ENCODE measurements at regions of chr4 and their contacts with region 1.

Region 1: DNA sequence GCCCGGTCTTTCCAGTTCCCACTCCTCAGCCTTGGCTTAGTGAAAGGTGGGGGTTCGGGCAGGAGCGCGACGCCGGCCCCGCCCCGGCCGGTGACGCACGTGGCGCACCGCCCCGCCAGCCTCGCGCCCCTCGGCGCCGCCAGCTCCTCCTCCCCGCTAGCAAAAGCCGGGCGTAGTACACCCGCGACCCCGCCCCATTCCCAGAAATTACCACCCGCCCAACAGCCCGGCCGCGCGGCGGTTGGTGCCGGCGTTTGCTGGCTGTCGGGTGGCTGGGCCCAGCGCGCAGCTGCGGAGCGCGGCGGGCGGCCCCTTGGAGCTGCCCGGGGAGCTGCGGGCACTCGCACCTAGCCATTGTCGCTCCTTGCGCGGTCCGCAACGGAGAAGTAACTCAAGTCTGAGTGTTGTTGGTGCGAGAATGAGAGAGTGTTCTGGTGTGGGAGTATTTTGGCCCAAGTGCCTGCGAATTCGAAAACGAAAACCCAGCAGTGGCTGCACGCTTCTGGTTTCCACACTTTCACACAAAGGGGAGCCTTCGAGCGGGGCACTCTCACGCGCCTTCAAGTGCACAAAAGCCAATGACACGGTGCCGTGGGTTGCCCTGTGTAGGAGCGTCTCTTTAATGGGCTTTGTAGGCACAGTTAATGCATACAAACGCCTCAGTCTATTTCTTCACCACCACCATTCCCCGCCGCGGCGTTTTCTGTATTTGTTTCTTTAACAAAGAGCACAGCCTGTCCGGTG is 1.0 kb upstream of the ELF2 start:
- DNase-seq: peak; percentile 94
- ATAC-seq: peak; percentile 77
- H3K4me3 Mint-ChIP-seq: peak overlapping the region; percentile 91
- H3K27ac Mint-ChIP-seq: peak overlapping the region; percentile 86
- H3K4me1 Mint-ChIP-seq: peaks cover 13% of the 10 kb centered on the region
- H3K27me3 Mint-ChIP-seq: peaks cover 31% of the 10 kb centered on the region

Region 2: DNA sequence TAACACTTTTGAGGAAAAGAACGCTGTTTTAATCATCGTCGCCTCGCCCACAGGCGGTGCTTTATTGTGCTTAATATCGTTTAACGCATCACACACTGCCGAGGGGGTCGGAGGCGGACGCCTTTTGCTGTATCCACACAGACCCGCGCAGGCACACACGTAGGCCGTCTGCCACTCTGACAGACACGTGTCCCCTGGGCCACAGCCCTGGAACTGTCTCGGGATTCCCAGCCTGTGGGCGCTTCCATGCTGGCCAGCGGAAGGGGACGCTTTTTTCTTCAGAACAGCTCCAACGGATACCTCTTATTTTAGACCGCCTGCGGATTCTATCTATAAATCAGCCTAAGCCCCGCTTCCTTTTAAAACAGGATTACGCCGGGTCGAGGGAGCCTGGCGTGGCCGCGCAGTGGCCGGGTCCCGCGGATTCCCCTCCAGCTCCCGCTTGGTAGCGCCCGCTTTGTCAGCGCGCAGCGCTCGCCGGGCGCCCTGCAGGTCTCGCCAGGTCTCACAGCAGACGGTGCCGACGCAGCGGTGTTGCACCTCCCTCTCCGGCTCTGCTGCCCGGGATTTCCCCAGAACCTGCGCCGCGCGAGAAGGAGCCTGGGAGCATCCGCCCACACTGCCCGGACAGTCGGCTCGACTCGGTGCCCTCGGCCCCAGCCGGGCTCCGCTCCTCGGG is 162.6 kb before region 1 on chr4 and contains the start of gene NOCT:
- POLR2A ChIA-PET with region 1: interaction called, 11 read pairs
- DNase-seq: peak; percentile 90
- ATAC-seq: peak; percentile 97
- H3K4me3 Mint-ChIP-seq: peak within 1 kb of the TSS; percentile 91
- H3K27ac Mint-ChIP-seq: peak within 1 kb of the TSS; percentile 87
- H3K4me1 Mint-ChIP-seq: peaks cover 17% of the 10 kb centered on the region
- H3K27me3 Mint-ChIP-seq: no peaks in the 10 kb centered on the region
- total RNA-seq, gene NOCT: 4.7 to 5.9 TPM

Region 3: DNA sequence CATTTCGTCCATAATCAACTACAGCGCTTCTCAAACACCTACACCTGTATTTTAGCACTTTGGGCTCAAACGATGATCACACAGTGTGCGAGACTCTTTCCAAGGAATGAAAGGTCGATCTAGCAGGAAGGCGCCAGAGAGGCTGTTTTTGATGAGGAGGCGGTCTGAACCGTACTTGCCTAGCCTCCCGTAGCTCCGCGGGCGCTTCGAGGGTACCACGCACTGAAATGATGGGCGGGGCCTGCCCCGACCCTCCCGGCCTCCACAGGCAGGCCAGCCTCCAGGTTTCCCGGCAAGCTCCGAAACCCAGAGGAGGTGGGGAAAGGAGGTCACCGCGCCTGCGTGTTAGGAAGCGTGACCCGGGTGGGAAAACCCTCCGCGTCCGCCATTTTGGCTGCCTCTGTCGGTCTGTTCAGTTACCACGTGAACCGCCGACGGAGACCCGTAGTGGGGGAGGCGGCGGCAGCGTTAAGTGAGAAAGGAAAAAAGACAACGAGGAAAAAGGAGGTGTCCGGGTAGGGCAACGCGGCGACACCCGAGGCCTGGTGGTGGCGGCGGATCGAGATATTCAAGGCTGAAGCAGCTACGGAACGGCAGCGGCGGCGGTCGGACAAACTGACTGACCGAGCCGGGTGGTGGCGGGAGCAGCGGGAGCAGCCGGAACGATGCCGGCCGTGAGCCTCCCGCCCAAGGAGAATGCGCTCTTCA is 123.2 kb after region 1 on chr4 and contains the start of gene NAA15:
- POLR2A ChIA-PET with region 1: interaction called, 20 read pairs
- DNase-seq: peak; percentile 95
- ATAC-seq: peak; percentile 90
- H3K4me3 Mint-ChIP-seq: peak within 1 kb of the TSS; percentile 93
- H3K27ac Mint-ChIP-seq: peak within 1 kb of the TSS; percentile 95
- H3K4me1 Mint-ChIP-seq: peaks cover 34% of the 10 kb centered on the region
- H3K27me3 Mint-ChIP-seq: no peaks in the 10 kb centered on the region
- total RNA-seq, gene NAA15: 42.1 to 50.3 TPM

Measured in activated naive CD8-positive, alpha-beta T cell treated with anti-CD3 and anti-CD28 coated beads, Interleukin-2, amount 10 ng/mL, durations not matched to agents 7 days and 5 days (primary cell).